Esophagus squamous epithelium (tissue), 5 donors: ENCODE measurements at regions of chr10 and their contacts with region 1.

Region 1: DNA sequence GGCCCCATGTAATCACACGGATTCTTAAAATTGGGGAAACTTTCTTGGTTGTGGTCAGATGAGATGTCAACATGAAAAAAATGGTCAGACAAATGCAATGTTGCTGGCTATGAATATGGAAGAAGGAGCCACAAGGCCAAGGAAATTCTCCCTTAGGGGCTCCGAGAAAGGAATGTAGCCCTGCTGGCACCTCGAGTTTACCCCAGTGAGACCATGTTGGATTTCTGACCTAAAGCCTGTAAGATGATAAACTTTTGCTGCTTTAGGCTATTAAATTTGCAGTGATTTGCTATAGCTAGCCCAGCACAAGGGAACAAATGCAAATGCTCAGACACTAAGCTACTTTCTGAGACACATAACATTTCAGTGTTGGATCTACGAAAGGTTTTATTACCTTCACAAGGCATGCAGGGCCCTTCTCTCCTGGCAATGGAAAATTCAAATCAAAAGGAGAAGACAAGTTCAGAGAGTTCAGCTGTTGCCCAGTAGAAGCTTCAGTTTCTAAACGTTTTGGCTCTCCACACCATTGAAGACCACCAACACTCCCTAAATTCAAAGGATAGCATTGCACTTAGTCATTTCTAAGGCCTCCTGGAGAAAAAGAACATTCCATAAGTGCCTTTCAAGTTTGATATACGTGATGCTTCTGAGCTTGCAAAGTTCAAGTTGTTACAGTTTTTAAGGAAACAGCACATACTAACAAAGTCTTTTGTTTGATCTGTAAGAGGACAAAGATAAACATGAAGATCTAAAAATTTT is 23.4 kb downstream of the MCMBP start:
- DNase-seq: no peak
- H3K4me3 ChIP-seq: no peak overlapping the region
- H3K27ac ChIP-seq: no peak overlapping the region
- H3K4me1 ChIP-seq: no peaks in the 10 kb centered on the region
- H3K27me3 ChIP-seq: no peaks in the 10 kb centered on the region
- CTCF ChIP-seq: no peak
- POLR2A ChIP-seq: no peak

Region 2: GRCh38 chr10:119693262-119693957 is 155.8 kb before region 1 on chr10:
- intact Hi-C with region 1: loop called (anchors 10 kb)
- DNase-seq: no peak
- H3K4me3 ChIP-seq: no peak overlapping the region
- H3K27ac ChIP-seq: no peak overlapping the region
- H3K4me1 ChIP-seq: no peaks in the 10 kb centered on the region
- H3K27me3 ChIP-seq: no peaks in the 10 kb centered on the region
- CTCF ChIP-seq: no peak
- POLR2A ChIP-seq: no peak